Naive thymus-derived CD4-positive, alpha-beta T cell (primary cell): ENCODE measurements at regions of chr1 and their contacts with region 1.

Region 1: GRCh38 chr1:26787706-26788514 is at the start of gene PIGV:
- DNase-seq: peak; percentile 81 to 95 (median 90)
- ATAC-seq: peak; percentile 84
- H3K4me3 ChIP-seq: peak within 1 kb of the TSS; percentile 91
- H3K4me3 Mint-ChIP-seq: peak within 1 kb of the TSS; percentile 81 to 99 (median 90)
- H3K27ac ChIP-seq: peak within 1 kb of the TSS; percentile 95
- H3K27ac Mint-ChIP-seq: peak within 1 kb of the TSS; percentile 87 to 100 (median 99)
- H3K4me1 ChIP-seq: peaks cover 41 to 42% of the 10 kb centered on the region in 2 donors
- H3K4me1 Mint-ChIP-seq: peaks cover 38 to 74% (median 69%) of the 10 kb centered on the region in 7 donors
- H3K27me3 ChIP-seq: no peaks in the 10 kb centered on the region
- H3K27me3 Mint-ChIP-seq: no peaks in the 10 kb centered on the region
- total RNA-seq, gene PIGV: 8.4 to 17.9 (median 16.7) TPM

Region 2: GRCh38 chr1:26602378-26602959 is 185.4 kb before region 1 on chr1:
- CTCF ChIA-PET with region 1: interaction called, 207 read pairs
- POLR2A ChIA-PET with region 1: interaction called, 74 read pairs
- intact Hi-C with region 1: loop called (anchors 1 kb)
- DNase-seq: peak in 7 of 9 donors; percentile 43 to 73 (median 65)
- ATAC-seq: peak; percentile 71
- H3K4me3 ChIP-seq: no peak overlapping the region
- H3K4me3 Mint-ChIP-seq: peak overlapping the region in 1 of 10 donors; percentile 41
- H3K27ac ChIP-seq: no peak overlapping the region
- H3K27ac Mint-ChIP-seq: peak overlapping the region in 2 of 9 donors; percentile 21 to 72
- H3K4me1 ChIP-seq: peaks cover 0 to 3% of the 10 kb centered on the region in 2 donors
- H3K4me1 Mint-ChIP-seq: peaks cover 0 to 16% (median 9%) of the 10 kb centered on the region in 7 donors
- H3K27me3 ChIP-seq: no peaks in the 10 kb centered on the region
- H3K27me3 Mint-ChIP-seq: peaks cover 0 to 9% (median 0%) of the 10 kb centered on the region in 5 donors

Region 3: DNA sequence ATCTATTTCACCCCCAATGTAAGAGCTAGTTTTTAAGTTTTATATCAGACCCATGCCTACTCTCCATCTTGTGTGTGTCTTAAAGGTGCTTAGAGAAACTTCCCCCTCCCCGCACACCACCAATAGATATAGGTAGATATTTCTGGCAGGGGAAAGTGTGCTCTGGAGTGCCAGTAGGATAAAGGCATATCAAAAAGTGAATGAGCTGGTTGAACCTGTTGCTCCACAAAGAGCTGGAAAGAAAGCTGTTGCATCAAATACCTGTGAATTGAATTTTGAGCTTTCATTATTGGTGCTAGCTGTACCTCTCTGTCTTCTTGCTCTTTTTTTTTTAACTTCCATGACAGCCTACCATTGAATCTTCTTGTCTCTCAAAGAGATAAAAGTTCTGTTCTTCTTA is 59.3 kb before region 1 on chr1:
- CTCF ChIA-PET with region 1: interaction called, 19 read pairs
- POLR2A ChIA-PET with region 1: interaction called, 10 read pairs
- intact Hi-C with region 1: loop called in 1 of 2 experiments (anchors 1 kb)
- DNase-seq: no peak
- ATAC-seq: no peak
- H3K4me3 ChIP-seq: no peak overlapping the region
- H3K4me3 Mint-ChIP-seq: peak overlapping the region in 7 of 10 donors; percentile 2 to 83 (median 39)
- H3K27ac ChIP-seq: peak overlapping the region; percentile 32
- H3K27ac Mint-ChIP-seq: peak overlapping the region in 8 of 9 donors; percentile 32 to 84 (median 80)
- H3K4me1 ChIP-seq: peaks cover 40 to 51% of the 10 kb centered on the region in 2 donors
- H3K4me1 Mint-ChIP-seq: peaks cover 68 to 95% (median 89%) of the 10 kb centered on the region in 7 donors
- H3K27me3 ChIP-seq: no peaks in the 10 kb centered on the region
- H3K27me3 Mint-ChIP-seq: no peaks in the 10 kb centered on the region

Region 4: GRCh38 chr1:26799479-26800142 is 11.7 kb after region 1 on chr1:
- CTCF ChIA-PET with region 1: interaction called, 22 read pairs
- POLR2A ChIA-PET with region 1: interaction called, 33 read pairs
- intact Hi-C with region 1: loop called in 1 of 2 experiments (anchors 1 kb)
- DNase-seq: no peak
- ATAC-seq: peak; percentile 18
- H3K4me3 ChIP-seq: no peak overlapping the region
- H3K4me3 Mint-ChIP-seq: peak overlapping the region in 6 of 10 donors; percentile 31 to 84 (median 66)
- H3K27ac ChIP-seq: peak overlapping the region; percentile 49
- H3K27ac Mint-ChIP-seq: peak overlapping the region; percentile 82 to 96 (median 92)
- H3K4me1 ChIP-seq: peaks cover 12 to 35% of the 10 kb centered on the region in 2 donors
- H3K4me1 Mint-ChIP-seq: peaks cover 19 to 56% (median 28%) of the 10 kb centered on the region in 7 donors
- H3K27me3 ChIP-seq: no peaks in the 10 kb centered on the region
- H3K27me3 Mint-ChIP-seq: no peaks in the 10 kb centered on the region

Region 5: GRCh38 chr1:26874896-26875295 is 87.0 kb after region 1 on chr1:
- CTCF ChIA-PET with region 1: interaction called, 6 read pairs
- POLR2A ChIA-PET with region 1: no interaction called
- intact Hi-C with region 1: loop called in 1 of 2 experiments (anchors 5 kb)
- DNase-seq: no peak
- ATAC-seq: no peak
- H3K4me3 ChIP-seq: no peak overlapping the region
- H3K4me3 Mint-ChIP-seq: no peak overlapping the region
- H3K27ac ChIP-seq: no peak overlapping the region
- H3K27ac Mint-ChIP-seq: no peak overlapping the region
- H3K4me1 ChIP-seq: no peaks in the 10 kb centered on the region
- H3K4me1 Mint-ChIP-seq: peaks cover 0 to 3% (median 0%) of the 10 kb centered on the region in 7 donors
- H3K27me3 ChIP-seq: no peaks in the 10 kb centered on the region
- H3K27me3 Mint-ChIP-seq: no peaks in the 10 kb centered on the region

Region 6: GRCh38 chr1:27026621-27027574 is 239.0 kb after region 1 on chr1:
- CTCF ChIA-PET with region 1: no interaction called
- POLR2A ChIA-PET with region 1: no interaction called
- intact Hi-C with region 1: no loop called
- DNase-seq: no peak
- ATAC-seq: no peak
- H3K4me3 ChIP-seq: no peak overlapping the region
- H3K4me3 Mint-ChIP-seq: no peak overlapping the region
- H3K27ac ChIP-seq: no peak overlapping the region
- H3K27ac Mint-ChIP-seq: peak overlapping the region in 2 of 9 donors; percentile 43 to 62
- H3K4me1 ChIP-seq: no peaks in the 10 kb centered on the region
- H3K4me1 Mint-ChIP-seq: peaks cover 0 to 3% (median 0%) of the 10 kb centered on the region in 7 donors
- H3K27me3 ChIP-seq: no peaks in the 10 kb centered on the region
- H3K27me3 Mint-ChIP-seq: peaks cover 0 to 10% (median 5%) of the 10 kb centered on the region in 5 donors

Region 7: DNA sequence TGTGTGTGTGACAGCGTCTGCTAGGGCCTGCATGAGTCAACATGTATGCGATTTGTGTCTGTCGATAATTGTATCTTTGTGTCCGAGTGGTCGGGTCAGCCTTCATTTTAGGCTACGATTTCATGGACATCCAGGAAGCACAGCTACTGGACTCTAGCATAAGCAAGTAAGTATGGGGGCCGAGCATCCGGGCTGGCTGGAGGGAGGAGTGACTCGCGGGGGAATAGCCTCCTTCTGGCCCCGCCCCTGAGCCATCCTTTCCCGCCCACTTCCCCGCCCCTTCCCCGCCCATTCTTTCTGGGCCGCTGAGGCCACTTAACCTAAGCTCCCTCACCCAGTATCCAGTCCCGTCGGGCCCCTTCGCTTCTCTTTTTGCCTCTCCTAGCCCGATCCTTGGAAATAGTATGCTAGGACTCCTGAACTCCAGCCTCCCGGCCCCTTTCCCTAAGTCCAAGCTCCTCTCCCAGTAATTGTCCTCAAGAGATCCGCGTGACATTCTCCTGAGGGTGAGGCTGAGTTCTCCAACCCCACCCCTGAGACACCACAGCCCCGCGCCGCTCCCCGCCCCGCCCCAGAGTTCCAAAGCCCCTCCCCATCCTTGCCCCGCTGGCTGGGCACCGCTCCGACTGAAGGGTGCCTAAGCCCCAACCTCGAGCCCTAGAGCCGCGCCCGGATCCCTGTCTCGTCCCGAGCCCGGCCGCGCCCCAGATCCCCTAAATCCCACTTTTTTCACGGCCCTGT is 577.6 kb after region 1 on chr1:
- CTCF ChIA-PET with region 1: no interaction called
- POLR2A ChIA-PET with region 1: no interaction called
- intact Hi-C with region 1: no loop called
- DNase-seq: peak; percentile 48 to 77 (median 67)
- ATAC-seq: peak; percentile 78
- H3K4me3 ChIP-seq: peak overlapping the region; percentile 61
- H3K4me3 Mint-ChIP-seq: peak overlapping the region; percentile 74 to 93 (median 88)
- H3K27ac ChIP-seq: peak overlapping the region; percentile 60
- H3K27ac Mint-ChIP-seq: peak overlapping the region; percentile 54 to 90 (median 73)
- H3K4me1 ChIP-seq: peaks cover 13 to 17% of the 10 kb centered on the region in 2 donors
- H3K4me1 Mint-ChIP-seq: peaks cover 21 to 55% (median 42%) of the 10 kb centered on the region in 7 donors
- H3K27me3 ChIP-seq: no peaks in the 10 kb centered on the region
- H3K27me3 Mint-ChIP-seq: no peaks in the 10 kb centered on the region